WTC11 (cell line): ENCODE measurements at regions of chr22 and their contacts with region 1.

Region 1: GRCh38 chr22:36775964-36776669 is at the start of gene IFT27:
- DNase-seq: peak; percentile 97
- ATAC-seq: peak; percentile 96
- H3K4me3 Mint-ChIP-seq: peak within 1 kb of the TSS; percentile 91
- H3K27ac Mint-ChIP-seq: peak within 1 kb of the TSS; percentile 93
- H3K4me1 Mint-ChIP-seq: peaks cover 13% of the 10 kb centered on the region
- H3K27me3 Mint-ChIP-seq: peaks cover 30% of the 10 kb centered on the region
- CTCF ChIP-seq: no peak
- total RNA-seq, gene IFT27: 47.9 to 56.3 TPM (median 53.8 TPM) in 3 replicates

Region 2: DNA sequence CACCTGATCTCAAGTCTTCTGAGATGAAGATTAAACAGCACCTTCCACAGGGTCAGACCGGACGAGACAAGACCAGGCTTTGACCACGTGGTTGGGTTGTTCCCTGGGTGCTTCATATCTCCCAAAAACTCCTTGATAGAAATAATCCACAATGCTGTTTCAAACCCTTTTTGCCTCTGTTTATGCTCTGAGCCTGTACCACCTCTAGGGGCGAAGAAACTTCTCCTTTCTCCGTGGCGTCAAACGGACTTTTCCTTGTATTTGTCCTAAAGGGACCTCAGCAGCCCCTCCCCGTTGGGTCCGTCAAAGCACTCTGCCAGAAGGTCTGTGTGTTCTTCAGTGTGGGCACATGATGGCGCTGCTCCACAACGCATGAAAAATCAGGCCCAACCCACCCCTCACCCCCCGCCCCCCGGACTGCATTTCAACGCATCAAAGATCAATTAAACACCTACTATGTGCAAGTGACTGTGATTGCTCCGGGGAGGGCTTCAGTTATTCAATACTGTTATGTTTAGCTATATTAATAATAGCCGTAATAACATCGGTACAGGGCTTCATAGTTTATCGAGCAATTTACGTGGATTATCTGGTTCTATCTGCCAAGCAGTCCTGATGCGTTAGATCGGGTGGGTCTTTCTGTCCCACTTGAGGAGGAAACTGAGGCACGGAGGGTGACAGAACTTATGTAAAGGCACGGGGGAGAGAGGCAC is 229.9 kb before region 1 on chr22:
- CTCF ChIA-PET with region 1: interaction called, 14 read pairs
- POLR2A ChIA-PET with region 1: no interaction called
- DNase-seq: peak; percentile 79
- ATAC-seq: peak; percentile 84
- H3K4me3 Mint-ChIP-seq: peak overlapping the region; percentile 44
- H3K27ac Mint-ChIP-seq: no peak overlapping the region
- H3K4me1 Mint-ChIP-seq: peaks cover 24% of the 10 kb centered on the region
- H3K27me3 Mint-ChIP-seq: peaks cover 14% of the 10 kb centered on the region
- CTCF ChIP-seq: peak; percentile 72

Region 3: DNA sequence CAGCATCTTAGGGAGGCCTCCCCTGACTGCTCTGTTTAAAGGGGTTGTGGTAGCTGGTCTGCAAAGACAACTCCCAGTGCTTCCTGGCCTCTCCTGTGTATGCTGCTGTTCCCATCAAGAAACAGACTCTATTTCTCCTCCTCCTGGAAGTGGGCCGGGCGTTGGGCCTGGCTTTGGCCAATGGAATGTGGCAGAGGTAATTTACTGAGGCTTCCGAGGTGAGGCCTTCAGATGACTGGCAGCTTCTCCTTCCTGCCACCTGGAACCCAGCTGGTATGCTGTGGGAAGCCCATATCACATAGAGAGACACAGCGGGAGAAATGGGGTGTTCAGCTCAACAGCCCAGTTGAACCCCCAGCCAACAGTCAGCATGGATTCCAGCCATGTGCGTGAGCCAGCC is 222.0 kb before region 1 on chr22:
- CTCF ChIA-PET with region 1: interaction called, 11 read pairs
- POLR2A ChIA-PET with region 1: no interaction called
- DNase-seq: peak; percentile 40
- ATAC-seq: peak; percentile 91
- H3K4me3 Mint-ChIP-seq: no peak overlapping the region
- H3K27ac Mint-ChIP-seq: no peak overlapping the region
- H3K4me1 Mint-ChIP-seq: peaks cover 7% of the 10 kb centered on the region
- H3K27me3 Mint-ChIP-seq: no peaks in the 10 kb centered on the region
- CTCF ChIP-seq: no peak

Region 4: GRCh38 chr22:36569999-36570398 is 206.1 kb before region 1 on chr22:
- CTCF ChIA-PET with region 1: interaction called, 11 read pairs
- POLR2A ChIA-PET with region 1: no interaction called
- DNase-seq: peak; percentile 74
- ATAC-seq: peak; percentile 96
- H3K4me3 Mint-ChIP-seq: no peak overlapping the region
- H3K27ac Mint-ChIP-seq: peak overlapping the region; percentile 85
- H3K4me1 Mint-ChIP-seq: peaks cover 7% of the 10 kb centered on the region
- H3K27me3 Mint-ChIP-seq: no peaks in the 10 kb centered on the region
- CTCF ChIP-seq: no peak

Region 5: GRCh38 chr22:36589856-36590255 is 186.3 kb before region 1 on chr22:
- CTCF ChIA-PET with region 1: no interaction called
- POLR2A ChIA-PET with region 1: no interaction called
- DNase-seq: no peak
- ATAC-seq: peak; percentile 31; the same call in 1 of the 2 replicates
- H3K4me3 Mint-ChIP-seq: no peak overlapping the region
- H3K27ac Mint-ChIP-seq: no peak overlapping the region
- H3K4me1 Mint-ChIP-seq: peaks cover 14% of the 10 kb centered on the region
- H3K27me3 Mint-ChIP-seq: peaks cover 12% of the 10 kb centered on the region
- CTCF ChIP-seq: no peak

Region 6: DNA sequence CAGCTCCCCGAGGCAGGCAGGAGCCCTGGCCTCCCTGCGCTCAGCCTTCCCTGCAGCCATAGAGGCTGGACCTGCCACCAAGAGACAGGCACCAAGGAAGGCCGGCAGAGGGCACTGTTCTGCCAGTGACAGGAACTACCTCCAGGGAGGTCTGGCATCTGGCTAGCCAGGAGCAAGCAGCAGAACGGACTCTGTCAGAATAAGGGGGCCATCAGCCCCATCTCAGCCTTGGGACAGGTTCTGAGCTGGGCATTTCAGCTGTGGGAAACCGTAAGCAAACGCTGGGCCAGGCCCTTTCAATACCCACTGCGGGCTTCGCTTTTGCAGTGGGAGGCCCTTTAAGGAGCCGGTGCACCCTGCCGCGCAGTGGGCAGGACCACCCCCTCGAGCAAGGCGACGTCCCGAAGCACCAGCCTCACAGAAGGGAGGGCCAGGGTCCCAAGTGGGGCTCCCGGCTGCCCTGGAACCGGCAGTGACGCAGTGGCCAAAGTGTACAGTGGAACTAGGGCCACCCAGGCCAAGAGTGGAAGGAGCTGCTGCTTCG is 18.4 kb before region 1 on chr22:
- CTCF ChIA-PET with region 1: interaction called, 58 read pairs
- POLR2A ChIA-PET with region 1: no interaction called
- DNase-seq: peak; percentile 93
- ATAC-seq: peak; percentile 92
- H3K4me3 Mint-ChIP-seq: no peak overlapping the region
- H3K27ac Mint-ChIP-seq: no peak overlapping the region
- H3K4me1 Mint-ChIP-seq: no peaks in the 10 kb centered on the region
- H3K27me3 Mint-ChIP-seq: peaks cover 12% of the 10 kb centered on the region
- CTCF ChIP-seq: peak; percentile 88